Activated T-helper 1 cell treated with anti-CD3 and anti-CD28 coated beads, Interleukin-12 subunit alpha, Interleukin-12 subunit beta, Interleukin-2, Interleukin-4 antibody, amounts not matched to agents 30 ng/mL and 10 ng/mL and 1 ng/mL, durations not matched to agents 14 hours and 24 hours and 36 hours (primary cell): ENCODE measurements at regions of chr9 and their contacts with region 1.

Region 1: DNA sequence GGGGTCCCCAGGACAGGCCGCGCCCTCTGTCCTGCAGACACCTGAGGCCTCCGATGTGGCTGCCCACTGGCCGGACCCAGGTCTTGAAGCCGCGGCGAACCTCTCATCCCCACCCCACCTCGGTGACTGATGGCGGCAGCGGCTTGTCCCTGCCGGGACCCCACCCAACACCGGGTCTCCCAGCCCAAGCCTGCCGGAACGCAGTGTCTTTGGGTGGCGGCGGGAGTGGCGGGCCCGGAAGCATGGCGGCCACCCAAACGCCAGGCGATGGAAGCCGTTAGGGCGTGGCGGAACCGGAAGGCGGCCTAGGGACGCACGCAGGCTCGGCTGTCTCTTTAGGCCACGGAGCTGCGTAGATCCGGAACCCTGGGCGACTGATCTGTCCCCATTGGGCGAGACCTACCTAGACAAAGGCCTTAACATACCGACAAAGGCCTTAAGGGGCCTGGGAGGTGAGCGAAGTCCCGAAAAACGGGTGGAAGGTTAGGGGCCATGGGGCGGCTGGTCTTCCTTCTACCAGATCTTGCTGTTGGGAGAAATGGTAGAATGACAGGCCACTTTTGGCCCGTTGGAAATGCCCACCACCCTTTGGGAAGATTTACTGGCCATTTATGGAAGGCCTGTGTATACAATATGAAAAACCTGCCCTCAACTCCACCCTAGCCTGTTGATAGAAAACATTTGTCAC is 94.6 kb upstream of the SMC2 start:
- DNase-seq: no peak
- H3K4me3 Mint-ChIP-seq: no peak overlapping the region
- H3K27ac Mint-ChIP-seq: no peak overlapping the region
- H3K4me1 Mint-ChIP-seq: no peaks in the 10 kb centered on the region
- H3K27me3 Mint-ChIP-seq: no peaks in the 10 kb centered on the region

Region 2: DNA sequence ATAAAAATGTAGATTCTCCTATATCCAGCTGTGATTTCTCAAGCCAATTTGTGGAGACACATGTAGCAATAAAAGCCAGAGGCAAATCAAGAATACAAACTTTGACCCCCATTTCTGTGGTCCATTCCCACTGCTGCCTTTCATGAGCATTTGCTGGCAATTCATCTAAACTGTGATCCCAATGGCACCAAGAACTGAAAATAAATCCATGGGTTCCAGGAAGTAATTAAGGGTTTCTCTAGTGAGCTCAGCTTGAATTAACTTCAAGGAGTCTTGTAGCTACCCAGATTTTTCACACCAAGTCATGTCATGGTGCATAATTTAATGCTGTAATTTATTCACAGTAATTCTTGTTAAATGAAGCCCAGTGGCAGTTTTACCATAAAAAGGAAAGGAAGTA is 50.4 kb before region 1 on chr9:
- intact Hi-C with region 1: loop called (anchors 5 kb)
- DNase-seq: no peak
- H3K4me3 Mint-ChIP-seq: no peak overlapping the region
- H3K27ac Mint-ChIP-seq: no peak overlapping the region
- H3K4me1 Mint-ChIP-seq: no peaks in the 10 kb centered on the region
- H3K27me3 Mint-ChIP-seq: no peaks in the 10 kb centered on the region